Ascending aorta (tissue), 2 donors: ENCODE measurements at regions of chr2 and their contacts with region 1.

Region 1: DNA sequence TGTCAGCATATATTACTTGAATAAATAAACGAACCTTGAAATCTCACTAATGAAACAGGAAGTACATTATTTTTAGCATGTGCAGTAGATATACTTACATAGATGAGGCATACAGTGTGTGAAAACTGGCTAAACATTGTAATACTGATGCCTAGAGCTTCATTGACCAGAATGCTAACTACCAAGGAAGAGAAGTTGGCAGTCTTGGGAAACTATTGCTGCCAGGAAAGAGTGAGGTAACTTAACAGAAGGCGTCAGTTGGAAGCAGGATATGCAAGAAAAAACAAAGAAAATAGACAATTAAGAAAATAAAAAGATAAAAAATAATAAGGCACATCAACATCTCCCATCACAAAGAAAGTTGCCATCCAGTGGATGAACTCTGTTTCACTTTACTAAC is 963.0 kb downstream of the TDRD15 start:
- DNase-seq: no peak
- H3K4me3 ChIP-seq: peak overlapping the region in 1 of 2 donors; percentile 9
- H3K27ac ChIP-seq: peak overlapping the region; percentile 55 to 66
- H3K4me1 ChIP-seq: peaks cover 0 to 3% of the 10 kb centered on the region in 2 donors
- H3K27me3 ChIP-seq: no peaks in the 10 kb centered on the region
- CTCF ChIP-seq: no peak

Region 2: DNA sequence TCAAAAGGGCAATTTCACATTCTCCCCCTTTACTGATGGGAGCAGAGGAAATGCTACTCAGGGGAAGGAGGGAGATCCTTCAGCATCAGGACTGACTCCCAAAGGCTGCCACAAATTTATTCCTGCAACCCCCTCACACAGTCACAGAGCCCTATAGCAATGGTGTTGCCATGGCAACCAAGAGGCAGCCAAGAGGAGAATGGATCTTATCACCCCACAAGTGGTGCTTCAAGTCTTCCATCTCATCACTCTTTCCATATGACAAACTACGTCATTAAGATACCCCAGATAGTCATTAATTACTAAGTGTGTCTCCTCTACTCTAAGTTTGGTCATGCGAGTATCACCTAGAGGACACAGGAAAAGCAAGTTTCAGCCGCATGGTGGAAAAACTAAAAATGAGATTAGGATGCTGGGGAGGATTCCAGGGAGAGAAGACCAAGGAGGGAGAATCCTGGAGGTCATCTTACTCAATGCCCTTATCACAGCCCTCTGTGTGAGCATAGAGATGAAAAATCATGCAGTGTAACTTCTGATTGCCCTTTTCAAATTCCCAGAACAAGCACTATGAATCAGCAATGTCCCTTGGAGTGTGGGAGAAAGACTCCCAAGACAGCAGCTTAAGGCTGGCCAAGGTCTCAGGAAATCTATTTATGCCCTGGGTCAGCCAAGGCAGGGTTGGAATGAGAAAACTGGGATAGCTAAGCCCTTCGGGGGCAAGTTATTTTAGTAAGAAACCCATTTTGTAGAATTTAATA is 412.5 kb after region 1 on chr2:
- intact Hi-C with region 1: loop called (anchors 10 kb)
- DNase-seq: peak in 1 of 2 donors; percentile 85
- H3K4me3 ChIP-seq: no peak overlapping the region
- H3K27ac ChIP-seq: peak overlapping the region; percentile 31 to 75
- H3K4me1 ChIP-seq: peaks cover 13 to 19% of the 10 kb centered on the region in 2 donors
- H3K27me3 ChIP-seq: no peaks in the 10 kb centered on the region
- CTCF ChIP-seq: no peak